Ascending aorta (tissue), 2 donors: ENCODE measurements at regions of chr17 and their contacts with region 1.

Region 1: GRCh38 chr17:74212913-74213791 is at the start of gene TTYH2:
- DNase-seq: peak; percentile 73 to 93
- H3K4me3 ChIP-seq: peak within 1 kb of the TSS; percentile 60 to 75
- H3K27ac ChIP-seq: peak within 1 kb of the TSS; percentile 68 to 81
- H3K4me1 ChIP-seq: peaks cover 23 to 34% of the 10 kb centered on the region in 2 donors
- H3K27me3 ChIP-seq: no peaks in the 10 kb centered on the region
- CTCF ChIP-seq: peak in 2 of 3 experiments; percentile 9 to 33
- total RNA-seq, gene TTYH2: 30.3 TPM

Region 2: GRCh38 chr17:73092523-73093135 is 1120.5 kb before region 1 on chr17 and contains the start of gene SLC39A11:
- intact Hi-C with region 1: loop called (anchors 10 kb)
- DNase-seq: peak; percentile 80 to 95
- H3K4me3 ChIP-seq: peak within 1 kb of the TSS; percentile 77 to 86
- H3K27ac ChIP-seq: peak within 1 kb of the TSS; percentile 66 to 74
- H3K4me1 ChIP-seq: peaks cover 3 to 24% of the 10 kb centered on the region in 2 donors
- H3K27me3 ChIP-seq: no peaks in the 10 kb centered on the region
- CTCF ChIP-seq: no peak
- total RNA-seq, gene SLC39A11: 4.9 TPM

Region 3: DNA sequence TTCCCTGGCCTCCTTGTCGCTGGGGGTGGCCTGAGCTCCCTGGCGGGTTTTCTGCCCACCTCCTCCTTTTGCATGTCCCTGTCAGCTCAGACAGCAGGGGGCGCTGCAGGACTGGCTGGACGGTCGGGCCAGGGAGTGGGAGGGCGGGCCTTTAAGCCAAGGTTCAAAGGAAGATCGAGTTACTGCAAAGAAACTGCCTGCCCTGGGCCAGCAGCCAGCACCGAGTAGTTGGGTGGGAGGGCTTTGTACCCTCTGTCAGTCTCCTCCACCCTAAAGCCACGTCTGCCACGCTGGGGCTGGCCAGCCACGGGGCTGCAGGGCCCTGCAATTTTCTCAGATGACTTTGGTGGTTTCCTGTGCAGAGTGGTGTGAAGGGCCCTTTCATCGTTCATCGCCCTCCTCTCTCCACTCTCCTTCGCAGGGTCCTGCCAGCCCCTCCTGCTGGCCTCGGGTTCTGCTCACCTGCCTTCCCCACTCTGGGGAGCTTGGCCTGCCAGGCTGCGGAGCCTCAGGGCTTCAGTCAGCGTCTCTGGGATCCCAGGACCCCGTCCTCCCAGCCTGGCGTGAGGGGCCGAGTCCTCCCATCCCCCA is 166.4 kb after region 1 on chr17:
- intact Hi-C with region 1: loop called (anchors 5 kb)
- DNase-seq: peak; percentile 63 to 97
- H3K4me3 ChIP-seq: peak overlapping the region in 1 of 2 donors; percentile 57
- H3K27ac ChIP-seq: peak overlapping the region; percentile 28 to 76
- H3K4me1 ChIP-seq: peaks cover 12 to 15% of the 10 kb centered on the region in 2 donors
- H3K27me3 ChIP-seq: no peaks in the 10 kb centered on the region
- CTCF ChIP-seq: peak; percentile 86 to 99 (median 97)